ENCODE measurements at regions of chr3 and their contacts with region 1.

Region 1: DNA sequence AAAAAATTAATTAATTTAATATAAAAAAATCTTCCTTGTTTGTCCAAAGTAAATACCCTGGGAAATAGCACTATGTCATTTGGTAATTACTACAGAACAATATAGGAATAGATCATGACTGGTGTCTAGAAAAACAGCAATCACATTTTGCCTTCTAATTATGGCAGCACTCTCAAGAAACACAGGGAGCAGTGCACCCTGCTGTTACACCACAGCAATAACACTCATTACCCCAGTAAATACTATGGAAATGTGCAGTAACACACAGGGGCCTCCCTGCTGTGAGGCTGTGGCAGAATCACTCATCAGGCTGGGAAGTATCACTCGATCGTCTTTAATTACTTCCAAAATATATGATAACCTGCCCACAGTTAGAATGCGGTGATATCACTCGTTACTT is 646.0 kb downstream of the TUSC7 start:
- DNase-seq: peak; percentile 2
- ATAC-seq: peak; percentile 70
- H3K4me3 ChIP-seq: no peak overlapping the region
- H3K27ac ChIP-seq: no peak overlapping the region
- H3K4me1 ChIP-seq: no peaks in the 10 kb centered on the region
- H3K27me3 ChIP-seq: no peaks in the 10 kb centered on the region
- CTCF ChIP-seq: peak; percentile 37; the same call in 1 of the 2 replicates
- EP300 ChIP-seq: no peak
- POLR2A ChIP-seq: no peak
- RAD21 ChIP-seq: no peak

Region 2: GRCh38 chr3:117059067-117059955 is 296.3 kb before region 1 on chr3:
- CTCF ChIA-PET with region 1: interaction called, 3 read pairs
- POLR2A ChIA-PET with region 1: no interaction called
- in situ Hi-C with region 1: no loop called
- intact Hi-C with region 1: loop called (anchors 1 kb)
- DNase-seq: peak; percentile 10
- ATAC-seq: no peak
- H3K4me3 ChIP-seq: no peak overlapping the region
- H3K27ac ChIP-seq: no peak overlapping the region
- H3K4me1 ChIP-seq: no peaks in the 10 kb centered on the region
- H3K27me3 ChIP-seq: no peaks in the 10 kb centered on the region
- CTCF ChIP-seq: peak; percentile 38
- EP300 ChIP-seq: no peak
- POLR2A ChIP-seq: no peak
- RAD21 ChIP-seq: no peak

Region 3: GRCh38 chr3:117589454-117589853 is 233.9 kb after region 1 on chr3:
- CTCF ChIA-PET with region 1: no interaction called
- POLR2A ChIA-PET with region 1: no interaction called
- in situ Hi-C with region 1: no loop called
- intact Hi-C with region 1: no loop called
- DNase-seq: no peak
- ATAC-seq: no peak
- H3K4me3 ChIP-seq: no peak overlapping the region
- H3K27ac ChIP-seq: no peak overlapping the region
- H3K4me1 ChIP-seq: no peaks in the 10 kb centered on the region
- H3K27me3 ChIP-seq: no peaks in the 10 kb centered on the region
- CTCF ChIP-seq: no peak
- EP300 ChIP-seq: no peak
- POLR2A ChIP-seq: no peak
- RAD21 ChIP-seq: no peak